Stomach (tissue), 19 donors: ENCODE measurements at regions of chr1 and their contacts with region 1.

Region 1: DNA sequence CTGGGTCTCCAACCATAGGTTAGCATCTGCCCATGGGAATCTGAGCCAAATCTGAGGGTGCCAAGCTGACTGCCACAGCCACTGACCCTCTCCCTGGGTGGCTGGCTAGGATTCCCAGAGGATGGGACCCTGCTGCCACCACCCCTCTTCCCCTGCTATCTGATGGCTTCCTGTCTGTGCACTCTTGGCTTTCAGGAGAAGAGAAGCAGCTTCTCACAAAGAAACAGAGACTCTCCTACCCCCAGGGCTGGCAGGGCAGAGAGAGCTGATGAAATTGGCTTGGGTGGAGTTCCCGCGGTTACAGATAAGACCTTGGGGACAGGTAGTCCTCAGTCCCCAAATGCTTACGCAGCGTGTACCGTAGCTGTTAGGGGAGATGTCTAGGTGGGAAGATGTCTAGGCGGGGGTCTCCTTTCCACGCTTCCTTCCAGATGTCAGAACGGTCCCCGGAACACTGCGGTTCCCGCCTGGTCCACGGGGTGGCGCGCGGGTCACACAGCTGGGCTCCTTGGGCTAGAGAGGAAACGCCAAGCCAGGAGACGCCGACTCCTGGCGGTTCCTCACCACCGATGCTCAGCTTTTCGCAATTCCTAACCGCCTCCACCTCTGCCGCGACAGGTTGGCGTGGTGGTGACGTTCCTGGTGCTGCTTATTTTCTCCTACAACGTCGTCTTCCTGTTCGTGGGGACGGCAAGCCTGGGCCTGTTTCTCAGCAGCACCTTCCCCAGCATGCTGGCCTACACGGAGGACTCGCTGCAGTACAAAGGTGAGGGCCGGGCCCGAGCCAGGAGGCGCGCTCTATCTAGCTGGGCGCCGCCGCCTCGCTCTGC is 40.1 kb downstream of the ELK4 start:
- DNase-seq: peak; percentile 90 to 95
- H3K4me3 ChIP-seq: peak overlapping the region; percentile 33 to 48 (median 38)
- H3K27ac ChIP-seq: peak overlapping the region; percentile 47 to 73 (median 66)
- H3K4me1 ChIP-seq: peaks cover 12 to 45% (median 20%) of the 10 kb centered on the region in 4 donors
- H3K27me3 ChIP-seq: no peaks in the 10 kb centered on the region
- CTCF ChIP-seq: peak in 6 of 7 experiments; percentile 33 to 99 (median 97)
- EP300 ChIP-seq: no peak
- POLR2A ChIP-seq: no peak

Region 2: GRCh38 chr1:205536759-205537361 is 54.9 kb before region 1 on chr1:
- intact Hi-C with region 1: loop called (anchors 10 kb)
- DNase-seq: peak; percentile 66 to 85
- H3K4me3 ChIP-seq: no peak overlapping the region
- H3K27ac ChIP-seq: peak overlapping the region in 3 of 5 donors; percentile 34 to 58 (median 38)
- H3K4me1 ChIP-seq: peaks cover 4 to 14% (median 9%) of the 10 kb centered on the region in 4 donors
- H3K27me3 ChIP-seq: no peaks in the 10 kb centered on the region
- CTCF ChIP-seq: no peak
- EP300 ChIP-seq: no peak
- POLR2A ChIP-seq: no peak

Region 3: DNA sequence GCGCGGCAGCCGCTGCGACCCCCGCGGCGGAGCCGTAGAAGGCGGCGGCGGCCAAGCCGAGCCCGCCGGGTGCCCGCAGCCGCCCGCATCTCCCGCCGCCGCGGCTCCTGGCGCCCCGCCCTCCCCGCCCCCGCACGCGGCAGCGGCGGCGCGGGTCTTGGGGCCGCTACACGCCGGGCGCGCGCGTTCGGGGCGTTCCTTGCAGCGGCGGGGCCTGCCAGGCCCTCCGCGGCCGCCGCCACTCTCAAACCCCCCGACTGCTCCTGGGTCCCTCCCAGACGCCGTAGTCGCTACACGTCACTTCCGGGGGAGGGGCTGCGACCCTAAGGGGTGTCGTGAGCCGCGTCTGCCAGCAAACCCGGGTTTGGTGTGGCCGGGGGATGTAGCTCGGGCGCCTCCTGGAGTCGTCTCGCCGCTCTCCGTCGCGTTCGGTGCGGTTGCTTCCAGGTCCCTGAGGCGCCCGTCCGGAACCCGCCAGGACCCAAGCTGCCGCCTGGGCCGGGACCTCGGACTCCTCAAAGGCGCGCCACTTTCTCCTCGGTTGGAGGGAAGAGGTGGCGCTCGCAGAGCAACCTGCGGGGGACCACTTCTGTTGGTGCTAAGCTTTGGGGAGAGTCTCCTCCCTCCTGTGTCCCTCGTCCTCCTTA is 40.1 kb after region 1 on chr1 and contains the start of gene ELK4:
- intact Hi-C with region 1: loop called (anchors 2 kb)
- DNase-seq: peak; percentile 99 to 100
- H3K4me3 ChIP-seq: peak within 1 kb of the TSS; percentile 56 to 83 (median 69)
- H3K27ac ChIP-seq: peak within 1 kb of the TSS; percentile 93 to 100 (median 98)
- H3K4me1 ChIP-seq: peaks cover 18 to 50% (median 33%) of the 10 kb centered on the region in 4 donors
- H3K27me3 ChIP-seq: no peaks in the 10 kb centered on the region
- CTCF ChIP-seq: peak in 5 of 7 experiments; percentile 52 to 87 (median 72)
- EP300 ChIP-seq: no peak
- POLR2A ChIP-seq: peak in 2 of 4 donors; percentile 39 to 67
- total RNA-seq, gene ELK4: 8.0 to 38.7 (median 18.1) TPM

Region 4: DNA sequence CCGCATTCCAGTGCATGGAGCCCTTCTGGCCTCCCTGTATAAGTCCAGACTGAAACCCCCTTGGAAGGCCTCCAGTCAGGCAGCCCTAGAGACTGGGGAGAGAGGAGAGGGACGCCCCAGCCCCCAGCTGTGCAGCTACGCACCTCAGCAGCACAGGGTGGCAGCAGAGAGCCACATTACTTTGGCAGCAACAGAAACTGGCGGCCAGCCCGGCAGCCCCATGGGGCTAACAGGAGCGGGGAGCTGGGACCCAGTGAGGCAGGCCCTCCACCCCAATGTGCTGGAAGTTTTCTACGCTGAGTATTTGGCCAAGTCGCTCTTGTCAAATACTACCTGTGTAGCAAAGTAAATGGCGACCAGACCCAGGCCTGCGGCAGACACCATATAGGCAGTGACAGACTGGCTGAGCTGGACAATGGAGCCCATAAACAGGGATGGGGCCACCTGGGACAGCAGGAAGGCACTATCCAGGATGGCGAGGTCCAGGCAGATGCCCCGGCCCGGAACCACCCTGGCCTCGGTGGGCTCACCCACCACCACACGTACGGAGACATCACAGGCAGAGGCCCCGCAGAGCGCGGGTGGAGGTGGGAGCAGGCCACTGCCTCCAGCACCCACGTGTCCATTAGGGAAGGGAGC is 67.3 kb after region 1 on chr1:
- intact Hi-C with region 1: loop called (anchors 5 kb)
- DNase-seq: peak; percentile 87 to 92
- H3K4me3 ChIP-seq: no peak overlapping the region
- H3K27ac ChIP-seq: no peak overlapping the region
- H3K4me1 ChIP-seq: peaks cover 6 to 53% (median 18%) of the 10 kb centered on the region in 4 donors
- H3K27me3 ChIP-seq: no peaks in the 10 kb centered on the region
- CTCF ChIP-seq: peak in 5 of 7 experiments; percentile 69 to 88 (median 85)
- EP300 ChIP-seq: no peak
- POLR2A ChIP-seq: no peak